ENCODE measurements at regions of chr17 and their contacts with region 1.

Region 1: DNA sequence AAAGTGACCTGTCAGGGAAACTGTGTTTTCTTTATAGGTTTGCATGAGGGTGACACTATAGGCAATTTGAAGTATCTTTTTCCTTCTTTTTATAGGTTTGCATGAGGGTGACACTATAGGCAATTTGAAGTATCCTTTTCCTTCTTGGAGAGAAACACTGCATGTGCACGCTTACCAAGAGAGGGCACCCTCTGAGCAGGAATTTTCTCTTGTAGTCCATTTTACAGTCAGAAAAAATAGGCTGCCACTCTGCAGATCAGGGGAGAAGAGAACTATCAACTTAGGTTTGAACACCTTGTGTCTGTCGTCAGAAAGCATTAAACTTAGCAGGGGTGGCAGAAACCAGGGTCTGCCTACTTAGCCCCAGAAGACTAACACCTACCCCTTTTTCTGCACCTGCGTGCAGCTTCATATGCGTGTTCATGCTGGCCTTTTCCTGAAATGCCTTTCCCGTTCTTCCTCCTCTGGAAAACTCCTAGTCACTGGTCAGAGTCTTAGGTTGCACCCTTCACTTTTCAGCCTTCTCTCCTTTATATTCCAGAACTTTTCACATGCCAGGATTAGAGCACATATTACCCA is 16.4 kb upstream of the SMIM36 start:
- DNase-seq: no peak
- H3K4me3 ChIP-seq: no peak overlapping the region
- CTCF ChIP-seq: peak; percentile 65

Region 2: GRCh38 chr17:55513885-55514591 is 13.6 kb before region 1 on chr17:
- CTCF ChIA-PET with region 1: interaction called, 56 read pairs
- POLR2A ChIA-PET with region 1: no interaction called
- DNase-seq: no peak
- H3K4me3 ChIP-seq: no peak overlapping the region
- CTCF ChIP-seq: peak; percentile 63

Region 3: DNA sequence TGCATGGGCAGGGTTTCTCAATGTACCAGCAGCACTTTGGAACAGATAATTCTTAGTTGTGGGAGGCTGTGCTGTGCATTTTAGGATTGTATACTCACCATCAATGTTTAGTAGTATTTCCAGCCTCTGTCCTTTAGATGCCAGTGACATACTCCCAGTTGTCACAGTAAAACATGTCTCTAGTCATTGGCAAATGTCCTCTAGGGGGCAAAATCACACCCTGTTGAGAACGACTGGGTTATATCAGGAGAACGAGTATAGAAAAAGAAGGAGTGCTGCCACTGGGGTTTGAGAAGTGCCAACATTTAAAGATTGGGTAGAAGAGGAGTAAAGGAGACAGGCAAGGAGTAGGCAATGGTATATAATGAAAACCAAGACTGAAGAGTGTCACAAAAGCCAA is 21.5 kb after region 1 on chr17:
- CTCF ChIA-PET with region 1: interaction called, 17 read pairs
- POLR2A ChIA-PET with region 1: no interaction called
- DNase-seq: no peak
- H3K4me3 ChIP-seq: no peak overlapping the region
- CTCF ChIP-seq: no peak

Region 4: DNA sequence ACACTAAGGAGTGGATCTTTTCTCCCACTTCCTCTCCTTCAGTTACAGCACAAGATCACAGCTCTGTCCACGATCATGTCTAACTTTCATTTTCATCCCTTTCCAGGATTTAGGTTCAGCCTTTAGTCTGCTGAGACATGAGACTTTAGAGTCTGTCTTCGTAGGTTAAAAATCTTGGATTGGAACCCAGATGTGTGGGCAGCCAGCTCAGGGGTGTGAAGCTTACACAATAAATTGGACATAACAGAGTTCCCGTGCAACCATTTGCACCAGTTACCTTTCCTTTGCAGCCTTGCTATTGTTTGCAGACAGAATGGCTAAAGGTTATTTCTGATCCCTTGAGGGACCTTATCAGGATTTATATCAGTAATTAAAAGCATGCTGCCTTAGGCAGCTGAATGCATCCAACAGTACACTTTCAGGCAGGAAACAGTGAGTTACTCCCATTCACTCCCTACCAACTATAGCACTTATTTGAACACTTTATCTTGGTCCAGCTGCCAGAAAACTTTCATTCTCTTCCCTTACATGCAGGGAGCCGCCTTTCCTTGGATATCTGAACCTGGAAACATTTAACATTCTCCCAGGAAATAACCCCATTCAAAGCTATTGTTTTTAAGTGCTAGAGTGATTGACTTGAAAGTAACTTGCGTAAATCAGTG is 107.8 kb after region 1 on chr17:
- CTCF ChIA-PET with region 1: interaction called, 60 read pairs
- POLR2A ChIA-PET with region 1: no interaction called
- DNase-seq: no peak
- H3K4me3 ChIP-seq: no peak overlapping the region
- CTCF ChIP-seq: no peak

Region 5: GRCh38 chr17:55717898-55718735 is 190.5 kb after region 1 on chr17:
- CTCF ChIA-PET with region 1: interaction called, 156 read pairs
- POLR2A ChIA-PET with region 1: no interaction called
- DNase-seq: no peak
- H3K4me3 ChIP-seq: no peak overlapping the region
- CTCF ChIP-seq: peak; percentile 60

Region 6: GRCh38 chr17:55735731-55736405 is 208.2 kb after region 1 on chr17:
- CTCF ChIA-PET with region 1: interaction called, 54 read pairs
- POLR2A ChIA-PET with region 1: no interaction called
- DNase-seq: no peak
- H3K4me3 ChIP-seq: no peak overlapping the region
- CTCF ChIP-seq: peak; percentile 54

Region 7: DNA sequence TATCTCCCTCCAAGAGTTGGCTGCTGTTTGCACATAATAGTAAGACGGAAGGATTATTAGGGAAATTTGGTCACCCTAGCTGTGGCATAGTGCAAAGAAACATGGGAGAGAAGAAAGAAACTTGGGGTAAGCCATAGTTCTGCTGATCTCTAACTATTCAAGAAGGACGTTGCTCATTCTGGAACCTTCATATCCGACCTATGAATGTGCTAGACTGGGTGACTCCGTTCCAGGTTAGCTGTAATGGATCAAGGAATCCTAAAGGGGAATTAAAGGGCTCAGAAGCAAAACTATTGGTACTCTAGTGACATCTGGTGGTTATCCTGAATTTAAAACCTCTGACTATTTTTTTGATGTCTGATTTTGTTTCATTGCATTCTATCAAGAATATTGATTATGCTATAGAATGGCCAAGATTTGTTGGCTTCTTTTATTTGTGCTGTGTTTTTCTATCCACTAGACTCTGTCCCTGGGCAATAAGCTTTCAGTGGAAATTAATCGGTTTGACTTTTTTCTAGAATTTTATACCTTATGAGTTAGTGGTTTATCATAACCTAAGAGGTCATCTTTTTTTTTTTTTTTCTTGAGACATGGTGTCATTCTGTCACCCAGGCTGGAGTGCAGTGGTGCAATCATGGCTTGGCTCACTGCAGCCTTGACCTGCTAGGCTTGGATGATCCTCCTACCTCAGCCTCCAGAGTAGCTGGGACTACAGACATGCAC is 242.7 kb after region 1 on chr17:
- CTCF ChIA-PET with region 1: interaction called, 199 read pairs
- POLR2A ChIA-PET with region 1: no interaction called
- DNase-seq: peak; percentile 4
- H3K4me3 ChIP-seq: no peak overlapping the region
- CTCF ChIP-seq: peak; percentile 23

Measured in AG04449 (cell line).